Naive thymus-derived CD4-positive, alpha-beta T cell (primary cell): ENCODE measurements at regions of chr11 and their contacts with region 1.

Region 1: GRCh38 chr11:118046051-118046963 is 30.6 kb upstream of the TMPRSS4 start:
- DNase-seq: peak in 7 of 9 donors; percentile 44 to 71 (median 52)
- ATAC-seq: peak; percentile 90
- H3K4me3 ChIP-seq: no peak overlapping the region
- H3K4me3 Mint-ChIP-seq: peak overlapping the region in 9 of 10 donors; percentile 26 to 66 (median 44)
- H3K27ac ChIP-seq: peak overlapping the region; percentile 68
- H3K27ac Mint-ChIP-seq: peak overlapping the region; percentile 68 to 94 (median 87)
- H3K4me1 ChIP-seq: peaks cover 86 to 87% of the 10 kb centered on the region in 2 donors
- H3K4me1 Mint-ChIP-seq: peaks cover 69 to 96% (median 87%) of the 10 kb centered on the region in 7 donors
- H3K27me3 ChIP-seq: no peaks in the 10 kb centered on the region
- H3K27me3 Mint-ChIP-seq: no peaks in the 10 kb centered on the region

Region 2: GRCh38 chr11:117953024-117953671 is 93.2 kb before region 1 on chr11:
- CTCF ChIA-PET with region 1: interaction called, 125 read pairs
- POLR2A ChIA-PET with region 1: interaction called, 146 read pairs
- intact Hi-C with region 1: loop called in 1 of 2 experiments (anchors 1 kb)
- DNase-seq: peak in 7 of 9 donors; percentile 55 to 77 (median 73)
- ATAC-seq: peak; percentile 58
- H3K4me3 ChIP-seq: peak overlapping the region; percentile 22
- H3K4me3 Mint-ChIP-seq: peak overlapping the region; percentile 75 to 92 (median 82)
- H3K27ac ChIP-seq: peak overlapping the region; percentile 58
- H3K27ac Mint-ChIP-seq: peak overlapping the region; percentile 87 to 96 (median 90)
- H3K4me1 ChIP-seq: peaks cover 59 to 68% of the 10 kb centered on the region in 2 donors
- H3K4me1 Mint-ChIP-seq: peaks cover 58 to 100% (median 98%) of the 10 kb centered on the region in 7 donors
- H3K27me3 ChIP-seq: no peaks in the 10 kb centered on the region
- H3K27me3 Mint-ChIP-seq: no peaks in the 10 kb centered on the region

Region 3: DNA sequence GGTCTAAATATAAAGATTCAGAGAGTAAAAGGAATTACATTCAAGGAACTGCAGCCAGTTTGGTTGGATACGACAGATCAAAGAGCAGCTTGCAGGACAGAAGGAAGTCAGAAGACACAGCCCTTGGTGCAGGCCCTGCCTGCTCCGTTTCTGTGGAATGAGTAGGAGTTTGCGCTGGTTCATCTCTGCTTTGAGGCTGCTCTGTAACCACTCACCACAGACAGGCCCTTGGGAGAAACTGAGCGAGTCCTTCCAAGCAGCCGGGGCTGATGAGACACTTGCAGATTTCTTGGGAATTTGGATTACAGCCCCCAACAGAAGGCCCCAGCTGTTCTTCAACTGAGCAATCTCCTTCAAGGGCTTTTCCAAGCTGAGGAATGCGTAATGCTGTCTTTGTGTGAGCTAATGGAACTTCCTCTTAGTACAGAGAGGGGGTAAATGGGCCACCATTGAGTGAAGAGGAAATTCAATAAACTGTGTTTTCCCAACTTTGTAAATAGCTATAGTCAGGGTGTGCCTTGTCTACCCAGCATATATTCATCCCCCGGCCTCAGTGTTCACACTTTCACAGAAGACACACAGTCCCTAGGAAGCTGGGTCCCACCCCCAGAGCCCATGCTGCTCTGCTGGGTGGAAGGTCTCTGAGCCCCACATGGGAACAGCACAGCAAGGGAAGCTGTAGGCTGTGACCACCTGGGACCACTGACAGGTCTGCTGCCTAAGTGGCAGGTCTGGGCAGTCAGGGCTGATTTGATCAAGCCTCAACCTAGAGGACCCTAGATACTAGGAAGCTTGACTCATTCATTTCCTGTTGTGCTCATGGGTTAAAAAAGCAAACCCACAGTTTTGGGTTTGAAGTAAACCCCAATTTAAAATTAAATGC is 43.5 kb before region 1 on chr11:
- CTCF ChIA-PET with region 1: interaction called, 29 read pairs
- POLR2A ChIA-PET with region 1: interaction called, 61 read pairs
- intact Hi-C with region 1: loop called (anchors 1 kb)
- DNase-seq: peak in 1 of 9 donors; percentile 70
- ATAC-seq: peak; percentile 55
- H3K4me3 ChIP-seq: peak overlapping the region; percentile 23
- H3K4me3 Mint-ChIP-seq: peak overlapping the region; percentile 1 to 82 (median 60)
- H3K27ac ChIP-seq: peak overlapping the region; percentile 58
- H3K27ac Mint-ChIP-seq: peak overlapping the region; percentile 51 to 98 (median 87)
- H3K4me1 ChIP-seq: peaks cover 64 to 96% of the 10 kb centered on the region in 2 donors
- H3K4me1 Mint-ChIP-seq: peaks cover 66 to 97% (median 80%) of the 10 kb centered on the region in 7 donors
- H3K27me3 ChIP-seq: no peaks in the 10 kb centered on the region
- H3K27me3 Mint-ChIP-seq: no peaks in the 10 kb centered on the region

Region 4: DNA sequence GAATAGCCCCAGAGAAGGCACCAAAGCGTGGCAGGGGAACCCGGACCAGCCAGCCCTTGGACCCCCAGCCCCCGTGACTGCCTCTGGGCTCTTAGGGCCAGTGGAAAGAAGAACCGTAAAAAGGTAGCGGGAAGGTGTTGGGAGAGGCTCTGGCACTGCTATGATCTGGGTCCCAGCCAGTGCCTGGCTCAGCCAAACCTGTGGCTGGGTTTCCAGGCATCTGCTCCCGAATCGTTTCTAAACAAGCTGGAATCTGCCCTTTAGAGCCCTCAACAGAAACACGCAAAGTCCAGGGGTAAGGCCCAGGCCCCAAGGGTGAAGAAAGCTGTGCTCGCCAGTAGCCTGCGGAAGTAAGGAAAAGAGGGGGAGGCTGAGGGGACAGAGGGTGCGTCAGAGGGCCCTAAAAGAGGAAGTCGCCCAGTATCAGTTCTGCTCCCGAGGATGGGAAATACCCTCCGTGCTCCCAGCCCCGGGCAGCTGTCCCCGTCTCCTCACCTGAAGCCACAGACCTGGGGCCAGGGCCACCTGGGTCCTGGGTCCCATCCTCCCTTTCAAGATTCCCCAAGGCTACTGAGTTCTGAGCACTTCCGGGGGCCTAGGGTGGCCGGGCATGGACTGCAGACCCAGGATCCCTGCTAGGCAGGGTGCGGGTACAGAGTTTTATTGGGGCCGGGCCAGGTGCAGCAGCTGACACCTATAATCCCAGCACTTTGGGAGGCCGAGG is 35.4 kb before region 1 on chr11:
- CTCF ChIA-PET with region 1: interaction called, 5 read pairs
- POLR2A ChIA-PET with region 1: interaction called, 16 read pairs
- intact Hi-C with region 1: loop called in 1 of 2 experiments (anchors 1 kb)
- DNase-seq: no peak
- ATAC-seq: peak; percentile 76
- H3K4me3 ChIP-seq: no peak overlapping the region
- H3K4me3 Mint-ChIP-seq: peak overlapping the region in 1 of 10 donors; percentile 56
- H3K27ac ChIP-seq: no peak overlapping the region
- H3K27ac Mint-ChIP-seq: peak overlapping the region in 4 of 9 donors; percentile 9 to 92 (median 52)
- H3K4me1 ChIP-seq: peaks cover 72 to 98% of the 10 kb centered on the region in 2 donors
- H3K4me1 Mint-ChIP-seq: peaks cover 82 to 93% (median 85%) of the 10 kb centered on the region in 7 donors
- H3K27me3 ChIP-seq: no peaks in the 10 kb centered on the region
- H3K27me3 Mint-ChIP-seq: no peaks in the 10 kb centered on the region

Region 5: DNA sequence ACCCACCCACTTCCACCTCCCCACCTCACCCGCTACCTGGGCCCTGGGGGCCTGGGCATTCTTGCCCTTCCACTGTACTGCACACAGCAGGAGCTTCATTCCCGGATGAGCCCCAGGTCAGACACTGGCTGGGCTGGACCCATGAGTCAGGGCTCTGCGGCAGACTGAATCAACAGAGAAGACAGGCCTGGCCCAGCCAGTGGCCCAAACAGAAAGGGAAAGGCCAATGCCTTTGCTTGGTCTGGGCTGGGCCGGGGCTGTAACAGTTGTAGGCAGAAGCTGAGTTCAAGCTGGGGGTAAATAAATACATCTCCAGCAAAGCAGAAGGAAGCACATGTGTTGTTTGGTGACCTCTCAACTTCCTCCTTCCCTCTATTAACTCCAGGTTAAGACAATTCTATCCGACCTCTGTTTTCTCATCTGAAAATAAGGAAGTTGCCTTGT is 42.2 kb after region 1 on chr11:
- CTCF ChIA-PET with region 1: no interaction called
- POLR2A ChIA-PET with region 1: no interaction called
- intact Hi-C with region 1: no loop called
- DNase-seq: peak in 1 of 9 donors; percentile 13
- ATAC-seq: peak; percentile 93
- H3K4me3 ChIP-seq: no peak overlapping the region
- H3K4me3 Mint-ChIP-seq: no peak overlapping the region
- H3K27ac ChIP-seq: no peak overlapping the region
- H3K27ac Mint-ChIP-seq: no peak overlapping the region
- H3K4me1 ChIP-seq: no peaks in the 10 kb centered on the region
- H3K4me1 Mint-ChIP-seq: peaks cover 0 to 4% (median 0%) of the 10 kb centered on the region in 7 donors
- H3K27me3 ChIP-seq: no peaks in the 10 kb centered on the region
- H3K27me3 Mint-ChIP-seq: peaks cover 0 to 19% (median 9%) of the 10 kb centered on the region in 5 donors